ENCODE measurements at regions of chr18 and their contacts with region 1.

Region 1: GRCh38 chr18:13823707-13824395 is at the start of gene MC5R:
- DNase-seq: peak; percentile 71
- ATAC-seq: peak; percentile 91 to 93
- H3K4me3 ChIP-seq: peak within 1 kb of the TSS; percentile 52
- H3K27ac ChIP-seq: no peak within 1 kb of the TSS
- H3K4me1 ChIP-seq: no peaks in the 10 kb centered on the region
- H3K27me3 ChIP-seq: peaks cover 9% of the 10 kb centered on the region
- CTCF ChIP-seq: peak; percentile 82
- total RNA-seq, gene MC5R: not detected

Region 2: DNA sequence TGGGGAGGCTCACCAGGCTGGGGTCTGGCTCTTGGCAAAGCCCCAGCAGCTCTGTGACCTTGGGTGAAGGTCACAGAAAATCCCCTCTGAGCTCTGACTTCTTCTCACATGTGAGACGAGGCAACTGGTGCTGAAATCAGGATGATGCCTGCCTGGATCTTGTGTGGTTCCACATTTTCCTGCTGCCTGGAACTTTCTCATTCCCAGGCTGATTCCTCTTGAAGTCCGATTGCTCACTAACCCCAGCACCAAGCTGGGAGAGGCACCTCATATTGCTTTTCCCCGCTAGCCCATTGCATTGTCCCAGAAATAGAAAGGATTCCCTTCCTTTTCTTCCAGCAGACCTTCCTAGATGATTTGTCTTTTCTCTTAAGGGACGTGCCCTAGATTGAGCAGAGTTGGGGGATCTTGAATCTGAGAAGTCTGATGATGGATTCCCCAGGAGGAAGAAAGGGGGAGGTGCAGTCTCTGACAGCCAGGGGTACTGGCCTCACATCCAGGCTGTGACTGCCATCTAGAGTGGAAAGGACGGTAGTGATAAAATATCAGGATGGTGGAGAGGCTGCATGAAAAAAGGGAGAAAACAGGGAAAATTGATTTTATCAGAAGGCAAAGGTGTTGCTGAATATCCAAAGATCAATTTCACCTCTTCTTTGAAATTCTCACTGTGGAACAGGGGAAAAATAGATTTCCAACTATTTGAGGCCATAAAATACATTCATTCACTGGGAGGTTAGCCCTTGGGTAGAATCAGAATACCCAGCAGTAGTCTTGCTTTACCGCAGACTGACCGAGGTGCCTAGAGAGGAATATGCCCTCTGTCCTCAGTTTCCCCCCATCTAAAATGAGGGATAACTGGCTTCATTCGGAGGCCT is 193.8 kb before region 1 on chr18:
- intact Hi-C with region 1: no loop called
- DNase-seq: no peak
- ATAC-seq: peak; percentile 68 to 80
- H3K4me3 ChIP-seq: no peak overlapping the region
- H3K27ac ChIP-seq: no peak overlapping the region
- H3K4me1 ChIP-seq: no peaks in the 10 kb centered on the region
- H3K27me3 ChIP-seq: no peaks in the 10 kb centered on the region
- CTCF ChIP-seq: peak; percentile 69

Region 3: DNA sequence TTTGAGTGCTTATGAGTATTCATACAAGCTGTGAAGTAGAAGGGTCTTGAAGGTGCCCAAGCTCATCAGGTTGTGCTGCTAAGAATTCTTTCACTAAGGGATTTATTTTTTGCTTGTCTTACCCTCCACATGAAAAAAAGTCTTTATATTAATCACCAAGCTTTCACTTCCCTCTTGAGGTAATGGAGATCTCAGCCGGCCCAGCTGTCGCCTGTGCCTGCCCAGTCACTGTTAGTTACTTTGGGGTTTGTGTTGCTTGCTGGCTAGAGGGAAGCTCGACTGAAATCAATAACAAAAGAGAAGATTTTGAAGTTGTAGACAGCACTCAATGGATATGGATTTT is 69.5 kb after region 1 on chr18:
- intact Hi-C with region 1: no loop called
- DNase-seq: no peak
- ATAC-seq: no peak
- H3K4me3 ChIP-seq: no peak overlapping the region
- H3K27ac ChIP-seq: no peak overlapping the region
- H3K4me1 ChIP-seq: no peaks in the 10 kb centered on the region
- H3K27me3 ChIP-seq: no peaks in the 10 kb centered on the region
- CTCF ChIP-seq: no peak

Region 4: DNA sequence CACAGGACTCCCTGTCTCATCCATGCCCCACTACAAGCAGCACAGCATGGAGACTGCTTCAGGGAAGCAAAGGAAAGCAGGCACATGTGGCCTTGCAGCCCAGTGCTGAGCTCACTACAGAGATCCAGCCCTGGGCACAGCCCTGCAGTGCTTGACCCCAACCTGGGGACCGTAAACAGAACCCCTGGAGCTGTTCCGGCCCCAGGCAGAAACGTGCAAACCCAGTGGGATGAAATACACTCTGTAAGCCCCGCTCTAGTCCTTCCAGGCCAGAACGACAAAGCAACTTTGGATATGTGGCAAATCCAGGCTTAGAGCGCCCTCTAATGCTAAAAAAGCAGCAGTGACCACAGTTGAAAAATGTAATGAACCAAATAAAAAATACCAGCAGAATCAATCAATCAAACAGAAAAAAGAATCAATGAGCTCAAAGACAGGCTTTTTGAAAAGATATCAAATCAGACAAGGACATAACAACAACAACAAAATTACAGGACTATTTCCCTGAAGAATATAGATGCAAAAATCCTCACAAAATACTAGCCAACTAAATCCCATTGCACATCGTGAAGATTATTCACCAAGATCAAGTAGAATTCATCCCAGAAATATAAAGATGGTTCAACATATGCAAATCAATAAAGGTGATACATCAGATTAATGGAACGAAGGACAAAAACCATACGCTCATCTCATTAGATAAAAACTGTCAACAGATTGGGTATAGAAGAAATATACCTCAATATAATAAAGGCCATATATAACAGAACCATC is 262.8 kb after region 1 on chr18:
- intact Hi-C with region 1: loop called (anchors 10 kb)
- DNase-seq: no peak
- ATAC-seq: peak in 1 of 2 donors; percentile 45
- H3K4me3 ChIP-seq: no peak overlapping the region
- H3K27ac ChIP-seq: no peak overlapping the region
- H3K4me1 ChIP-seq: no peaks in the 10 kb centered on the region
- H3K27me3 ChIP-seq: no peaks in the 10 kb centered on the region
- CTCF ChIP-seq: peak; percentile 49